ENCODE measurements at regions of chr22 and their contacts with region 1.

Region 1: GRCh38 chr22:39785232-39785631 is 108.3 kb downstream of the ENTHD1 start:
- DNase-seq: no peak
- H3K4me3 ChIP-seq: no peak overlapping the region
- H3K27ac ChIP-seq: no peak overlapping the region
- H3K4me1 ChIP-seq: no peaks in the 10 kb centered on the region
- H3K27me3 ChIP-seq: no peaks in the 10 kb centered on the region
- CTCF ChIP-seq: no peak

Region 2: GRCh38 chr22:39559454-39560105 is 225.7 kb before region 1 on chr22:
- CTCF ChIA-PET with region 1: no interaction called
- dilution Hi-C with region 1: no loop called
- in situ Hi-C with region 1: no loop called
- intact Hi-C with region 1: no loop called
- DNase-seq: no peak
- H3K4me3 ChIP-seq: no peak overlapping the region
- H3K27ac ChIP-seq: no peak overlapping the region
- H3K4me1 ChIP-seq: peaks cover 7% of the 10 kb centered on the region
- H3K27me3 ChIP-seq: peaks cover 12% of the 10 kb centered on the region
- CTCF ChIP-seq: peak; percentile 16 to 55

Region 3: GRCh38 chr22:39738746-39739145 is 46.5 kb before region 1 on chr22:
- CTCF ChIA-PET with region 1: no interaction called
- dilution Hi-C with region 1: no loop called
- in situ Hi-C with region 1: no loop called
- intact Hi-C with region 1: no loop called
- DNase-seq: no peak
- H3K4me3 ChIP-seq: no peak overlapping the region
- H3K27ac ChIP-seq: no peak overlapping the region
- H3K4me1 ChIP-seq: no peaks in the 10 kb centered on the region
- H3K27me3 ChIP-seq: peaks cover 3% of the 10 kb centered on the region
- CTCF ChIP-seq: no peak

Region 4: DNA sequence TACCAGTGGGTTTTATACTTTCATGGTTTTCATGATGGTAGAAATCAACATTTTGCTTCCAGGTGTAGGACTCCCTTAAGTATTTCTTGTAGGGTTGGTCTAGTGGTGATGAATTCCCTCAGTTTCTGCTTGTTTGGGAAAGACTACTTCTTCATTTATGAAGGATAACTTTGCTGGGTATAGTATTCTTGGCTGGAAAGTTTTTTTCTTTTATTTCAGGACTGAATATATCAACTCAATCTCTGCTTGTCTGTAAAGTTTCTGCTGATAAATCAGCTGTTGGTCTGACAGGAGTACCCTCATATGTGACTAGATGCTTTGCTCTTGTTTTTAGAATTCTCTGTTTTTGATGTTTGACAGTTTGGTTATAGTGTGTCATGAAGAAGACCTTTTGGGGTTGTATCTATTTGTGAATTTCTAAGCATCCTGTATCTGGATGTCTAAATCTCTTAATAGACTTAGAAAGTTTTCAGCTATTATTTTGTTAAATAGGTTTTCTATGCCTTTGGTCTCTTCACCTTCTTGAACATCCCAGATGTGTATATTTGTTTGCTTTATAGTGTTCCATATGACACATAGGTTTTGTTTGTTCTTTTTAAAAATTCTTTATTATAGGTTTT is 12.4 kb after region 1 on chr22:
- CTCF ChIA-PET with region 1: no interaction called
- dilution Hi-C with region 1: no loop called
- in situ Hi-C with region 1: no loop called
- intact Hi-C with region 1: no loop called
- DNase-seq: no peak
- H3K4me3 ChIP-seq: no peak overlapping the region
- H3K27ac ChIP-seq: no peak overlapping the region
- H3K4me1 ChIP-seq: peaks cover 8% of the 10 kb centered on the region
- H3K27me3 ChIP-seq: no peaks in the 10 kb centered on the region
- CTCF ChIP-seq: no peak

Region 5: GRCh38 chr22:39927544-39927943 is 142.3 kb after region 1 on chr22:
- CTCF ChIA-PET with region 1: no interaction called
- dilution Hi-C with region 1: loop called (anchors 5 kb)
- in situ Hi-C with region 1: no loop called
- intact Hi-C with region 1: no loop called
- DNase-seq: no peak
- H3K4me3 ChIP-seq: no peak overlapping the region
- H3K27ac ChIP-seq: no peak overlapping the region
- H3K4me1 ChIP-seq: peaks cover 18% of the 10 kb centered on the region
- H3K27me3 ChIP-seq: no peaks in the 10 kb centered on the region
- CTCF ChIP-seq: no peak

Measured in mammary epithelial cell (primary cell).